ENCODE measurements at regions of chr14 and their contacts with region 1.

Region 1: DNA sequence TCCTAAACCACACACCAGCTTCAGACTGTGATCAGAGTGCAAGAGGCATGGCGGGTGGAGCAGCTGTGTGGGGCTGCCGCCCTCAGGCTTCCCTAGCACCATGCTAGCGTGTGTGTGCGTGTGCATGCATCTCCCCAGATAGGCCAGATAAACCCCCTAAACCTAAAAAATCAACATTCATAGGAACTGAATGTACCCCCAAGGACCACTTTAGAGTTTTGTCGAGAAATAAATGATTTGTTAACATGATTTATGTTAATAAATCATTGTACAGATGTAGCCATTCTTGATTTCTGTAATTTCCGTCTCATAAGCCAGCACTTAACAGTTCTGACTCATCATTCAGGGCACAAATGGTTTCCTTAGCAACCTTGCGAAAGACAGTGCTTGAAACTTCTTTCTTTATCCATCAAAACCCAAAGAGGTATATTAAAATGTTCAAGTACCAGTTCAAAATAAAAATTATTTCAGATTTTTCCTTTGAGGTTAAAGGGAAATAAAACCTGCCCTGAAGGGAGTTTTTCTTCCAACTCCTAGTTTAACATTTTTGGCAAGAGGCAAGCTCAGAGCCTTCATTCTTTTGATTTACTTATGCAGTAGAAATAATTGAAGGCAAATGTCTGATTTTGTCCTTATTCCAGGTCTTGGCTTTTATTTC is 206.2 kb upstream of the RGS6 start:
- DNase-seq: peak; percentile 48
- H3K27ac ChIP-seq: peak overlapping the region; percentile 51
- CTCF ChIP-seq: no peak

Region 2: GRCh38 chr14:71366861-71367260 is 359.2 kb before region 1 on chr14:
- CTCF ChIA-PET with region 1: interaction called, 10 read pairs
- POLR2A ChIA-PET with region 1: no interaction called
- DNase-seq: no peak
- H3K27ac ChIP-seq: no peak overlapping the region
- CTCF ChIP-seq: no peak

Region 3: GRCh38 chr14:71764701-71765382 is 38.8 kb after region 1 on chr14:
- CTCF ChIA-PET with region 1: no interaction called
- POLR2A ChIA-PET with region 1: no interaction called
- DNase-seq: no peak
- H3K27ac ChIP-seq: no peak overlapping the region
- CTCF ChIP-seq: no peak